Panc1 (cell line): ENCODE measurements at regions of chr20 and their contacts with region 1.

Region 1: GRCh38 chr20:49877386-49877921 is 37.9 kb downstream of the SPATA2 start:
- DNase-seq: no peak
- ATAC-seq: no peak
- H3K4me3 ChIP-seq: no peak overlapping the region
- H3K27ac ChIP-seq: no peak overlapping the region
- H3K4me1 ChIP-seq: no peaks in the 10 kb centered on the region
- H3K27me3 ChIP-seq: no peaks in the 10 kb centered on the region
- CTCF ChIP-seq: no peak

Region 2: GRCh38 chr20:49569411-49570115 is 307.9 kb before region 1 on chr20:
- CTCF ChIA-PET with region 1: interaction called, 10 read pairs
- POLR2A ChIA-PET with region 1: no interaction called
- in situ Hi-C with region 1: no loop called
- intact Hi-C with region 1: no loop called
- DNase-seq: no peak
- ATAC-seq: no peak; the same call in 1 of the 2 replicates
- H3K4me3 ChIP-seq: no peak overlapping the region
- H3K27ac ChIP-seq: peak overlapping the region; percentile 56; the same call in 1 of the 2 replicates
- H3K4me1 ChIP-seq: peaks cover 25% of the 10 kb centered on the region
- H3K27me3 ChIP-seq: no peaks in the 10 kb centered on the region
- CTCF ChIP-seq: no peak

Region 3: DNA sequence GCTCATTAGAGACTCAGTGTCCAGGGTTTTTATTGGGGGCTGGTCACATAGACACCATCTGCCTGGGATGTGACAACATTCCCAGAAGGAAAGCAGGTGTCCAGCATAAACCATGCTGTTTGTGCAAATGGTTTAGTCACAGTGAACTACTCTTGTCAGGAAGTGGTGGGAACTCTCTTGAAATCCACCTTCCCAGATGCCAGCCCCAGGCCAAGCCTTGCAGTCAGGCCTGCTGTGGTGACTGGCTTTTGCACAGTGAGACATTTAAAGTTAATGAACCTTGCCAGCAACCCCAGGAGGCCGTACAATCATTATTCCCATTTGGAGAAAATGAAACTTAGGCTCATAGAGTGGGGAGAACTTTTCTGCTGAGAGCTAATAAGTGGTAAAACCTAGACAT is 1387.9 kb after region 1 on chr20:
- CTCF ChIA-PET with region 1: interaction called, 10 read pairs
- POLR2A ChIA-PET with region 1: no interaction called
- in situ Hi-C with region 1: no loop called
- intact Hi-C with region 1: no loop called
- DNase-seq: no peak
- ATAC-seq: no peak
- H3K4me3 ChIP-seq: no peak overlapping the region
- H3K27ac ChIP-seq: no peak overlapping the region
- H3K4me1 ChIP-seq: no peaks in the 10 kb centered on the region
- H3K27me3 ChIP-seq: peaks cover 8% of the 10 kb centered on the region
- CTCF ChIP-seq: no peak